Esophagus muscularis mucosa (tissue), 4 donors: ENCODE measurements at regions of chr12 and their contacts with region 1.

Region 1: GRCh38 chr12:751192-751998 is 984 bp upstream of the WNK1 start:
- DNase-seq: peak; percentile 97
- H3K4me3 ChIP-seq: peak overlapping the region; percentile 90 to 92 (median 91)
- H3K27ac ChIP-seq: peak overlapping the region; percentile 98 to 99 (median 99)
- H3K4me1 ChIP-seq: peaks cover 7 to 35% (median 24%) of the 10 kb centered on the region in 4 donors
- H3K27me3 ChIP-seq: no peaks in the 10 kb centered on the region
- CTCF ChIP-seq: peak; percentile 64 to 69 (median 67)
- EP300 ChIP-seq: no peak
- POLR2A ChIP-seq: peak; percentile 30

Region 2: DNA sequence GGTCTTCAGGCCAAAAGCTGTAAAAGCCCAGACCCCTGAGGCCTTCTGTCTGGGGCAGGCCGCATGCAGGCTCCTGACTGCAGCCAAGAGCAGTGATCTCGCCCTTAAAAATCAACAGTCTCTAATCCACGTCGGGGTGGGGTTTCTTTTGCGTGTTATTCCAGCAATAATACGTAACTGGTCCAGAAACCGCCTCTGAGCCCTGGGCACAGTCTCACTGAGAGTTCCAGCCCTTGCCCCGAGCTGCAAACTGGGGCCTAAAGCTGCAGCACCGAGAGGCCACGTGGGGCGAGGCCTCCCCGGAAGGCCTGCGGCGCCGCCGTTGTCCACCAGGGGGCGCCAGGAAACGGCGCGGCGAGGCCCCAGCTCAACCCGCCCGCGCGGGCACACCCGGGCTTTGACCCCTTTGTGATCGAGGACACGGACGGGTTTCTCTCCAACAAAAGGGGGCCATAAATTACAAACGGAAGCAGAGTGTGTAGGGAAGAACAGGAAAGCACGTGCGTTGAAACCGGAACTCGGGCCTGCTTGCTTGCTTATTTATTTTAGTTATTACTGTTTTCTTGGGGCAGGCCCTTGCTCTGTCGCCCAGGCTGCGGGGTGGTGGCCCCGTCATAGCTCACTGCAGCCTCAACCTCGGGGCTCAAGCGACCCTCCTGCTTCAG is 175.3 kb before region 1 on chr12:
- intact Hi-C with region 1: loop called (anchors 1 kb)
- DNase-seq: no peak
- H3K4me3 ChIP-seq: peak overlapping the region; percentile 17 to 29 (median 24)
- H3K27ac ChIP-seq: peak overlapping the region; percentile 29 to 71 (median 57)
- H3K4me1 ChIP-seq: peaks cover 47 to 53% (median 48%) of the 10 kb centered on the region in 4 donors
- H3K27me3 ChIP-seq: no peaks in the 10 kb centered on the region
- CTCF ChIP-seq: peak in 2 of 3 experiments; percentile 99 to 100
- EP300 ChIP-seq: no peak
- POLR2A ChIP-seq: no peak

Region 3: GRCh38 chr12:630656-631632 is 120.5 kb before region 1 on chr12:
- intact Hi-C with region 1: loop called (anchors 5 kb)
- DNase-seq: no peak
- H3K4me3 ChIP-seq: peak overlapping the region; percentile 22 to 51 (median 24)
- H3K27ac ChIP-seq: peak overlapping the region; percentile 62 to 82 (median 72)
- H3K4me1 ChIP-seq: peaks cover 25 to 40% (median 37%) of the 10 kb centered on the region in 4 donors
- H3K27me3 ChIP-seq: no peaks in the 10 kb centered on the region
- CTCF ChIP-seq: no peak
- EP300 ChIP-seq: no peak
- POLR2A ChIP-seq: peak; percentile 24

Region 4: GRCh38 chr12:810671-811415 is 59.4 kb after region 1 on chr12:
- intact Hi-C with region 1: loop called (anchors 5 kb)
- DNase-seq: no peak
- H3K4me3 ChIP-seq: no peak overlapping the region
- H3K27ac ChIP-seq: no peak overlapping the region
- H3K4me1 ChIP-seq: peaks cover 26 to 47% (median 45%) of the 10 kb centered on the region in 4 donors
- H3K27me3 ChIP-seq: no peaks in the 10 kb centered on the region
- CTCF ChIP-seq: no peak
- EP300 ChIP-seq: no peak
- POLR2A ChIP-seq: no peak

Region 5: DNA sequence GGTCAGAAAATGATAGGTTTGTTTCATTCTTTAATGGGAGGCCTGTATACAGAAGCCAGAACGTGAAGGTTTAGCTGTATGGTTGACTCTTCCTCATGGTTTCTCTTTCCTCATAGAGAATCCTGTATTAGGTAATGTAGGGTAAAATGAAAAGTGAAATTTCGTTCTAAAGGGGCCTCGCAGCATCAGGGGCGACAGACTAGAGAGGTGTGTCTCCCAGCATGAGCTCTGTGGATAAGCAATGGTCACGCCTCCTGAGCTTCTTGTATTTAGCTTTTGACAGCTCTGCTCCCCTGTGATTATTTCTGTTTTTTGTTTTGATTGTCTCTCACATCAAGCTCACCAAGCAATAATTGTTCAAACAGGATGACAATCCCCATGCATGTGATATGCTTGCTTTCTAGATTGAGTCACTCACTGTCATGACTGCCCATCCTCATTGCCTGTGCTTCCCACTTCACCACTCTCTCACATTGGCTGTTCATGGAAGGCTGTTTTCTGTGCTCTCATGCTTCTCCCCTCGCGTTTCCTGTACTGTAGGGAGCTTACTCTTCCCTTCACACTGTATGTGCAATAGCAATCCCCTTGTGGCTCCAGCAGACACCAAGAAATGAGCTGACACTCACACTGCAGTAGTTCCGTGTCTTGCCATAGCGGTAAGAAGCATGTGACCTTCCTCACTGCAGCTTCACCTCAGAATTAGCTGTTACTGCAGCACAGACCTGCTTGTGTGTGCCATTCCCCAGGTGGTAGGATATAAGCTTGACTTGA is 154.1 kb after region 1 on chr12:
- intact Hi-C with region 1: no loop called
- DNase-seq: no peak
- H3K4me3 ChIP-seq: no peak overlapping the region
- H3K27ac ChIP-seq: no peak overlapping the region
- H3K4me1 ChIP-seq: peaks cover 0 to 13% (median 6%) of the 10 kb centered on the region in 4 donors
- H3K27me3 ChIP-seq: no peaks in the 10 kb centered on the region
- CTCF ChIP-seq: no peak
- EP300 ChIP-seq: no peak
- POLR2A ChIP-seq: no peak

Region 6: GRCh38 chr12:920676-921075 is 169.3 kb after region 1 on chr12:
- intact Hi-C with region 1: no loop called
- DNase-seq: no peak
- H3K4me3 ChIP-seq: no peak overlapping the region
- H3K27ac ChIP-seq: no peak overlapping the region
- H3K4me1 ChIP-seq: peaks cover 0 to 7% (median 2%) of the 10 kb centered on the region in 4 donors
- H3K27me3 ChIP-seq: no peaks in the 10 kb centered on the region
- CTCF ChIP-seq: no peak
- EP300 ChIP-seq: no peak
- POLR2A ChIP-seq: no peak

Region 7: DNA sequence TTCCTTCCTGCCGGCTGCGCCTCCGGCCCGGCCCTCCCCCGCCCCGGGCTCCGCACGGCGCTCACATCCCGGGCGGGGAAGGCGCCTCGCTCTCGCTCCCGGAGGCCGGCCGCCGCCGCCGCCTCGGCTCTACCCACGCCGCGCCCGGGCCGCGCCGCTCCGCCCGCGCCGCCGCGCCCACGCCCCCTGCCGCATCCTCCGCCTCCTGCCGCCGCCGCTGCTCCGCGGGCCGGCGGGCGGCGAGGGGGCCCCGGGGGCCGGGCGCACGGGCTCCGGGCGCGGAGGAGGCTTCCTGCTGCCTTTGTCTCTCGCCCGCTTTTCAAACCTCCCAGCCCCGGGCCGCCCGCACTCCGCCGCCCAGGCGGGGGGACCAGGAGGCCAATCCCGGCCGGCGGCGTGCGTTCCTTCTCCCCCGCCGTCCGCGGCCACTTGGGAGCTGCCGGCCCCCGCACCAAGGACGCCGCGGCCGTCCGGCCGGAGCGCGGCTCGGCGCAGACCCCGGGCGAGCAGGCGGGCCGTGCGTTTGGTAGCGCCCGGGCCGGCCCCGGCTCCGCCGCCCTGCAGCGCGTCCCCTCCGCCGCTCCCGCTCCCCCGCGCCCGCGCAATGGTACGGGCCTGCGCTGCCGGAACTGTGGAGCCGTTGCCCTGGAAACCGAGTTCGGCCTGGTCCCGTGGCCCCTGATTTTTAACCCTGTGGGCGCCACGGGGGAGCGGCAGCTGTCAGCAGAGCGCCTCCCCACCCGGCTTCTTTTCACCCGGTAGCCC is 843.0 kb after region 1 on chr12 and contains the start of gene FBXL14:
- intact Hi-C with region 1: loop called (anchors 10 kb)
- DNase-seq: peak; percentile 95
- H3K4me3 ChIP-seq: peak within 1 kb of the TSS; percentile 84 to 96 (median 88)
- H3K27ac ChIP-seq: peak within 1 kb of the TSS; percentile 84 to 95 (median 94)
- H3K4me1 ChIP-seq: peaks cover 45 to 57% (median 56%) of the 10 kb centered on the region in 4 donors
- H3K27me3 ChIP-seq: no peaks in the 10 kb centered on the region
- CTCF ChIP-seq: peak in 1 of 3 experiments; percentile 23
- EP300 ChIP-seq: no peak
- POLR2A ChIP-seq: no peak
- total RNA-seq, gene FBXL14: 12.0 to 22.6 (median 16.0) TPM